ENCODE measurements at regions of chr9 and their contacts with region 1.

Region 1: GRCh38 chr9:34546834-34547827 is 24.3 kb upstream of the ENHO start:
- DNase-seq: no peak
- H3K4me3 ChIP-seq: no peak overlapping the region
- H3K27me3 ChIP-seq: peaks cover 5% of the 10 kb centered on the region
- CTCF ChIP-seq: peak; percentile 71

Region 2: GRCh38 chr9:34403554-34404380 is 143.4 kb before region 1 on chr9:
- CTCF ChIA-PET with region 1: interaction called, 20 read pairs
- POLR2A ChIA-PET with region 1: no interaction called
- DNase-seq: no peak
- H3K4me3 ChIP-seq: no peak overlapping the region
- H3K27me3 ChIP-seq: no peaks in the 10 kb centered on the region
- CTCF ChIP-seq: peak; percentile 98

Region 3: DNA sequence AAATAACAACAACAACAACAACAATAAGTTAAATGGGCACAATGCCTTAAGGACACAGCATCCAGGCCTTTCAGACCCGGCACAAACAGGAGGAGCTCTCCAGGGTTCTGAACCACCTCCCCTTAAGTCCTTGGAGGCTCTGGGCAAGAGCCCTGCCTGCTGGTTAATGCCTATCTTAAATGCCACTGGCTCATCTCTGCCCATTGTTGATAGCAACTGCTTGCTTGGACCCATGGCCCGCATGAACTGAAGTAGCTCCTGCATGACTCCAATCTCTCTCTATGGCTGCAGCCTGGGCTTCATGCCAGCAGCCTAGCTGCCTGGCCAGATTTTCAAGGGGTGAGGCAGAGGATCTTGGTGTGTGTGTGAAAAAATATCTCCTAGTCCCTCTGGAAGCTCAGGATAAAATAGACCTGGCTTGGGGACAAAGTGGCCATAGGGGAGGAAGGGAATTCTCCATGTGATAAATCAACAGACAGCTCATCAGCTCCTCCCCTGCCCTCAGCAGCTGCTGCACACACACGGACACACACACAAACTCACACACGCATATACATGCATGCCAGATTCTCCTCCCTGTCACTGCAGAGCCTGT is 116.2 kb before region 1 on chr9:
- CTCF ChIA-PET with region 1: interaction called, 15 read pairs
- POLR2A ChIA-PET with region 1: no interaction called
- DNase-seq: no peak
- H3K4me3 ChIP-seq: no peak overlapping the region
- H3K27me3 ChIP-seq: no peaks in the 10 kb centered on the region
- CTCF ChIP-seq: no peak

Region 4: GRCh38 chr9:34536685-34537084 is 10.4 kb before region 1 on chr9:
- CTCF ChIA-PET with region 1: interaction called, 10 read pairs
- POLR2A ChIA-PET with region 1: no interaction called
- DNase-seq: no peak
- H3K4me3 ChIP-seq: no peak overlapping the region
- H3K27me3 ChIP-seq: peaks cover 8% of the 10 kb centered on the region
- CTCF ChIP-seq: no peak

Region 5: GRCh38 chr9:34559624-34560452 is 12.7 kb after region 1 on chr9:
- CTCF ChIA-PET with region 1: interaction called, 21 read pairs
- POLR2A ChIA-PET with region 1: no interaction called
- DNase-seq: no peak
- H3K4me3 ChIP-seq: no peak overlapping the region
- H3K27me3 ChIP-seq: peaks cover 3% of the 10 kb centered on the region
- CTCF ChIP-seq: no peak

Region 6: GRCh38 chr9:34578241-34579103 is 31.3 kb after region 1 on chr9:
- CTCF ChIA-PET with region 1: interaction called, 10 read pairs
- POLR2A ChIA-PET with region 1: no interaction called
- DNase-seq: no peak
- H3K4me3 ChIP-seq: no peak overlapping the region
- H3K27me3 ChIP-seq: peaks cover 38% of the 10 kb centered on the region
- CTCF ChIP-seq: no peak

Region 7: DNA sequence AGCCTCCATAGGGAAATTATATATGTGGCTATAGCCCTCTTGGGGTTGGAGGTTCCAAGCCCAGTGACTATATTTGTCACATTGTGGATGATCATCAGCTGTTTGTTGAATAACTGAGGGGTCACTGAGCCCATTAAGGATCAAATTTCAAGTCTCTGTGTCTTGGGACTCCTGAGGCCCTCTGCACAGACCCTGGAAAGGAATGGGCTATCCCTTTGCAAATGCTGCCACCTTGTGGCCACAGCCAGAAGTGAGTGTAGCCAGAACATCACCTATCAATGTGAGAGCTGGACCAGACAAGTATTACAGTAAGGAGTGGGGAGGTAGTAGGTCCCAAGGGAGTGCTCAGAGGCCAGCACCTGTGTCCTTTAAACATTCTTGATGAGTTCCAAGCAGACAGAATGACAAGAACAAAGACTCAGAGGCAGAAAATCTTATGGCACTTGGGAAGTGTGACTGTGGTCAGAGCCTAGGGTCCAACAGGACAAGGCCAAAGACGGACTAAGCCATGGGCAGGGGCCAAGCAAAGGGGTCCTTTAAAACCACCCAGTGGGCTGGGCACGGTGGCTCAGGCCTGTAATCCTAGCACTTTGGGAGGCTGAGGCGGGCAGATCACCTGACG is 56.6 kb after region 1 on chr9:
- CTCF ChIA-PET with region 1: interaction called, 37 read pairs
- POLR2A ChIA-PET with region 1: no interaction called
- DNase-seq: no peak
- H3K4me3 ChIP-seq: no peak overlapping the region
- H3K27me3 ChIP-seq: peaks cover 4% of the 10 kb centered on the region
- CTCF ChIP-seq: peak; percentile 88

Region 8: DNA sequence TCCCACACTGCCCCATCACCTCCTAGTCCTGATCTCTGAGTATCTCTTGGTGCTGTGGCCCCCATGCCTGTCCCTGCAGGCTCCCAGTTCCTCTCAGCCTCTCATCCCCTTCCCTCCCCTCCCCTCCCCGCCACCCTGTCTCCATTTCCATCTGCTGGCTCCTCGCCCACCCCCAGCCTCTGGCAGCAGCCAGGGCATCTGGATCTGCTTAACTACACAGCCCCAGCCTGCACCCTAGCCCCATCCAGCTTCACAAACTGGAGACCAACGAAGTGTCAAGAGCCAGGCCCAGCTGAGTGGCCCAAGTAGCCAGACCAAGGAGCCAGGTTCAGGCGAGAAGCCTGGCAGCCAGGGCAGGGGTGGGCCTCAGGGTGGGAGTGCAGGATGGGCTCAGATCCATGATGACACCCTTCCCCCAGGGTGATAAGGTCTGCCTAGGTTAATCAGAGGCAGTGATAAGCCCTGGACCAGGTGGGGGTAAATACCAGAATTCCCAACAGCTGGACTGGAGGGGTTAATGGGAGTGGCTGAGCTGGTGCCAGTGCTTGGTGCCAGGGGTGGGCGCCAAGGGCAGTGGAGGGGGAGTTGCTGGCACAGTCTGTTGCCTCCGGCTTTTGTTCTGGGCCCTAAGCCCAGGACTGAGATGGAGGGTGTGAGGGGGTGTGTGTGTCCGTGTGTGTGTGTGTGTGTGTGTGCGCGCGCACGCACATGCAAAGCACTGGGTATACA is 107.4 kb after region 1 on chr9:
- CTCF ChIA-PET with region 1: no interaction called
- POLR2A ChIA-PET with region 1: no interaction called
- DNase-seq: no peak
- H3K4me3 ChIP-seq: no peak overlapping the region
- H3K27me3 ChIP-seq: no peaks in the 10 kb centered on the region
- CTCF ChIP-seq: no peak

Region 9: DNA sequence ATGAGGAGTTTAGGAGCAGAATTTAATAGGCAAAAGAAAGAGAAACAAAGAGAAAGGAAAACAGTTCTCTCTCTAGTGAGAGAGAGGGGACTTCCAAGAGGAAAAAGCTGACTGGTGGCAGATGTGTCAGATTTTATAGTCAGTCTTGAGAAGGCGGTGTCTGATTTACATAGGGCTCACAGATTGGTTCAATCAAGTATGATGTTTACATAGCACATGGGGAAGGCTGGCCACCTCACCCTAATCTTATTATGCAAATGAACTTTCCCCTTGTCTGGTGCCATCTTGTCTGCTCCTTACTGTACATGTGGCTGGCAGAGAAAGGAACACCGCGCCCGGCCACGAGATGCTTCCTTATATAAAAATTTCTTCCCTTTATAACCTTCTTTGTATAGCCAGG is 639.4 kb after region 1 on chr9:
- CTCF ChIA-PET with region 1: no interaction called
- POLR2A ChIA-PET with region 1: no interaction called
- DNase-seq: no peak
- H3K4me3 ChIP-seq: no peak overlapping the region
- H3K27me3 ChIP-seq: no peaks in the 10 kb centered on the region
- CTCF ChIP-seq: no peak